ENCODE measurements at regions of chr11 and their contacts with region 1.

Region 1: GRCh38 chr11:59207988-59208451 is 4.7 kb downstream of the MPEG1 start:
- DNase-seq: peak in 2 of 4 donors; percentile 45 to 75
- ATAC-seq: peak; percentile 77
- H3K4me3 ChIP-seq: peak overlapping the region in 1 of 2 donors; percentile 44
- H3K27ac ChIP-seq: peak overlapping the region; percentile 13 to 51
- H3K4me1 ChIP-seq: peaks cover 8 to 57% of the 10 kb centered on the region in 2 donors
- H3K27me3 ChIP-seq: no peaks in the 10 kb centered on the region
- CTCF ChIP-seq: peak; percentile 57

Region 2: DNA sequence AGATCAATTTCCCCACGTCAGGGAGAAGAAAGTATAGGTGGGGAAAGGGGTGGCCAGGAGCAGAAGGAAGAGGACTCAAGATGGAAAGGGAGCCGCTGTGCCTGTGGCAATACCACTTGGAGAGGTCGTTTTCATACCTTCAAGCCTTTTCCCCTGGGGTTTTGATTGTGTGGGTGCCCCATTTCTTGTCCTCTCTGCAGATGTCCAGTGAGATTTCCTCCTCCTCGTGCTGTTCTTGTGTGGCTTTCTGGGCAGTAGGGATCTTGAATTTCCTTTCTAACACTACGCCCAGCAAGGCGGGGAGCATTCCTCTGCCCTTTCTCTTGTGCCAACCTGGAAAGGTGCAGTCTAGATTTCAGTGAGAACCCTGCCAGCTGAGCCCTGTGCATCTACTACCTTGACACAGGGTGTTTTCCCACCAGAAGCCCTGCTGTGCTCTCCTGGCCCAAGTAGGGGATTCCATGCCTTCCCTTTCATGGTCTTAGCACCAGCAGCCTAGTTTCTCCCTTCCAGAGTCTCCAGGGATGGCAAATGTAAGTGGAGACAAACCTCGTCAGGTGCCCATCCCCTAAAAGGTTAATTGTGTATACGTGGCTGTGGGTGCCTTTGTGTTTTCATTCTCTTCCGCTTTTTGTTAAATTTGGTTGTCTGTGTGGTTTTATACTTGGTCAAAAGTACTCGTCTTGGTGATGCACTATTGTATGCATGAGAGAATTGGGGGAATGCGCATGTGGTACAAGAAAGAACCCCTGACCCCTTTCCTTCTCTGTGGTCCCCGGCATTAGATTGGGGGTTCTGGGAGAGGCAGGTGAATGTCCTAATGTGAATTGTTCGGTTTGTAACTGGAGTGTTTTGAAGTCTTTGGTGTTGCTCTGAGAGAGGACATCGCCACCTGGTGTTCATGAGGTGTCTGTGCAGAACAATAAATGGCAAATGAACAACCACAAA is 76.1 kb after region 1 on chr11:
- intact Hi-C with region 1: loop called in 1 of 2 experiments (anchors 10 kb)
- DNase-seq: peak in 2 of 4 donors; percentile 51 to 72
- ATAC-seq: peak; percentile 95
- H3K4me3 ChIP-seq: no peak overlapping the region
- H3K27ac ChIP-seq: no peak overlapping the region
- H3K4me1 ChIP-seq: peaks cover 0 to 12% of the 10 kb centered on the region in 2 donors
- H3K27me3 ChIP-seq: no peaks in the 10 kb centered on the region
- CTCF ChIP-seq: peak; percentile 76 to 79